CD8-positive, alpha-beta T cell (primary cell): ENCODE measurements at regions of chr20 and their contacts with region 1.

Region 1: DNA sequence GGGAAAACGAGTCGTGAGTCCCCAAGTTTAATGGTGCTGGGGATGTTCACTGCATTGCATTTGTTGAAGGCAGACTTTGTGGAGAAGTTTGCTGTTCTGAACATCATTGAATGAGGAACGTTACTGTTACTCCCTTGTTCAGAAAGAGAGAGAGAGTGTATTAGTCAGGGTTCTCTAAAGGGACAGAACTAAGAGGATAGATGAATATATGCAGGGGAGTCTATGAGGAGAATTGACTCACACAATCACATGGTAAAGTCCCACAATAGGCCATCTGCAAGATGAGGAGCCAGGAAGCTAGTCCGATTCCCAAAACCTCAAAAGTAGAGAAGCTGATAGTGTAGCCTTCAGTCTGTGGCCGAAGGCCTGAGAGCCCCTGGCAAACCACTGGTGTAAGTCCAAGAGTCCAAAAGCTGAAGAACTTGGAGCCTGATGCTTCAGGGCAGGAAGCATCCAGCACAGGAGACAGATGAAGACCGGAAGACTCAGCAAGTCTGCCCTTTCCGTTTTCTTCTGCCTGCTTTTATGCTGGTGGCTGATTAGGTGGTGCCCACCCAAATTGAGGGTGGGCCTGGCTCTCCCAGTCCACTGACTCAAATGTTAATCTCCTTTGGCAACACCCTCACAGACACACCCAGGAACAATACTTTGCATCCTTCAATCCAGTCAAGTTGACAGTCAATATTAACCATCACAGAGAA is 223.5 kb upstream of the PCSK2 start:
- DNase-seq: no peak
- ATAC-seq: no peak
- H3K4me3 ChIP-seq: no peak overlapping the region
- H3K4me3 Mint-ChIP-seq: no peak overlapping the region
- H3K27ac ChIP-seq: no peak overlapping the region
- H3K27ac Mint-ChIP-seq: no peak overlapping the region
- H3K4me1 ChIP-seq: no peaks in the 10 kb centered on the region
- H3K4me1 Mint-ChIP-seq: no peaks in the 10 kb centered on the region
- H3K27me3 ChIP-seq: no peaks in the 10 kb centered on the region
- H3K27me3 Mint-ChIP-seq: no peaks in the 10 kb centered on the region
- CTCF ChIP-seq: no peak

Region 2: DNA sequence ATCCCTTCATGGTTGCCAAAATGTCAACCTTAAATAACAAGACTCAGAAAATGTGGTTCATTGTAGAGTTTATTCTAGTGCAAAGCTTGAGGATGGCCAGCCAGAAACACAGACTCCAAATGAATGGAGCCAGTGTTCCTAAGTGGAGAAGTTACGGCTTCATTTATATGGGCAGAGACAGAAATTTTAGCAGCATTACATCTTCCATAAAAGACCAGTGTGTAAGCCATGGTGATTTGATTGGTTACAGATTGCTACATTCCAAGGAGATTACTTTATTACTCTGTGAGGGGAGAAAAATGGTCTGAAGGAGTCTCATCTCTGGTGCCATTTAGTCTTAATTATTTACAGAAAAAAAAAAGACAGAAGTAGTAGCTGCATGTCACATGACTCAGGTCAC is 157.3 kb before region 1 on chr20:
- CTCF ChIA-PET with region 1: no interaction called
- POLR2A ChIA-PET with region 1: no interaction called
- intact Hi-C with region 1: no loop called
- DNase-seq: no peak
- ATAC-seq: no peak
- H3K4me3 ChIP-seq: no peak overlapping the region
- H3K4me3 Mint-ChIP-seq: no peak overlapping the region
- H3K27ac ChIP-seq: no peak overlapping the region
- H3K27ac Mint-ChIP-seq: no peak overlapping the region
- H3K4me1 ChIP-seq: no peaks in the 10 kb centered on the region
- H3K4me1 Mint-ChIP-seq: no peaks in the 10 kb centered on the region
- H3K27me3 ChIP-seq: no peaks in the 10 kb centered on the region
- H3K27me3 Mint-ChIP-seq: no peaks in the 10 kb centered on the region
- CTCF ChIP-seq: no peak

Region 3: GRCh38 chr20:17066902-17067301 is 63.6 kb after region 1 on chr20:
- CTCF ChIA-PET with region 1: no interaction called
- POLR2A ChIA-PET with region 1: no interaction called
- intact Hi-C with region 1: loop called in 1 of 2 experiments (anchors 10 kb)
- DNase-seq: no peak
- ATAC-seq: no peak
- H3K4me3 ChIP-seq: no peak overlapping the region
- H3K4me3 Mint-ChIP-seq: no peak overlapping the region
- H3K27ac ChIP-seq: no peak overlapping the region
- H3K27ac Mint-ChIP-seq: no peak overlapping the region
- H3K4me1 ChIP-seq: no peaks in the 10 kb centered on the region
- H3K4me1 Mint-ChIP-seq: no peaks in the 10 kb centered on the region
- H3K27me3 ChIP-seq: no peaks in the 10 kb centered on the region
- H3K27me3 Mint-ChIP-seq: no peaks in the 10 kb centered on the region
- CTCF ChIP-seq: no peak

Region 4: DNA sequence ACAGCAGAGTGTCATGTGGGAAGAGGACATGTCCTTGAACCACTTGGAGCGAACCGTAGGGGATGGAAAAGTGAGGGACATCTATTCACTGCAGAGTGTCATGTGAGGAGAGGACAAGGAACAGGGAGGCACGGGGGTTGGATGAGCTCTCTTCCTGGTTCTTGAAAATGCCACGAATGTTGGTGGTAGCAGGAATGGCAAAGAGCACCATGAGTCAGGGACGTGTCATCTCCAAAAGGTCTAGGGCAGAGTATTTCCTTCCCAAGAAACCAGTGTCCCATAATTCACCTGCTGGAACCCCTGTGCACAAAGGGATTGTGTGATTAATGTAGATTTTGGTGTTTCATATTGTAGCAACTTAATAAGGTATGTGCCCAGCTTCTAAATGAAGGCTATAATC is 391.1 kb after region 1 on chr20:
- CTCF ChIA-PET with region 1: no interaction called
- POLR2A ChIA-PET with region 1: no interaction called
- intact Hi-C with region 1: no loop called
- DNase-seq: no peak
- ATAC-seq: no peak
- H3K4me3 ChIP-seq: no peak overlapping the region
- H3K4me3 Mint-ChIP-seq: no peak overlapping the region
- H3K27ac ChIP-seq: no peak overlapping the region
- H3K27ac Mint-ChIP-seq: no peak overlapping the region
- H3K4me1 ChIP-seq: no peaks in the 10 kb centered on the region
- H3K4me1 Mint-ChIP-seq: no peaks in the 10 kb centered on the region
- H3K27me3 ChIP-seq: no peaks in the 10 kb centered on the region
- H3K27me3 Mint-ChIP-seq: peaks cover 15% of the 10 kb centered on the region
- CTCF ChIP-seq: no peak